H1 (cell line): ENCODE measurements at regions of chr13 and their contacts with region 1.

Region 1: DNA sequence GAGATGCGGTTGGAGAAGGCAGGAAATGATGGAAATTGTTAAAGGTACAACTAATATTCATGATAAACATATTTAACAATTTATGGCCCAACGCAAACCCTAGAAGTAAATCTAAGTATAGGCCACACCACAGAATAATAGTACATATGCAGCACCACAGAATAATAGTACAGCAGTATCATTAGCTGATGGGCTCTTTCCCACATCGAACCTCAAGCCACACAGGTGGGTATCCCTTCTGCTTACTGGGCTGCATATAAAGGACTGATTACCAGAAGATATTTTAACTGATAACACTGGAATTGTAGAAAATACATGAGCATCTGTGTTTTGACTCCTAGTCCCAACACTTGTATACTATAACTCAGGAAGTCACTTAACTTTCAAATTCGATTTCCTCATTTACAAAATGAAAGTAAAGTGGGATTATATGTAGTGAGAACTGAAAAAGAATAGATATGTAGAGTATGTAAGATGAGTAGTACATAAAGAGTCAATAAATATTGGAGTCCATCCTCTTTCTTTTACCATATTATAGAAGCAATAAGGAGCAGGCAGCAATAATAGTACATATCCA is 91.5 kb downstream of the TSC22D1 start:
- DNase-seq: no peak
- H3K4me3 ChIP-seq: no peak overlapping the region
- H3K27ac ChIP-seq: no peak overlapping the region
- H3K4me1 ChIP-seq: no peaks in the 10 kb centered on the region
- H3K27me3 ChIP-seq: no peaks in the 10 kb centered on the region
- CTCF ChIP-seq: no peak
- EP300 ChIP-seq: no peak
- POLR2A ChIP-seq: no peak
- RAD21 ChIP-seq: no peak

Region 2: GRCh38 chr13:44474122-44474909 is 10.3 kb before region 1 on chr13:
- CTCF ChIA-PET with region 1: interaction called, 18 read pairs
- POLR2A ChIA-PET with region 1: no interaction called
- DNase-seq: no peak
- H3K4me3 ChIP-seq: no peak overlapping the region
- H3K27ac ChIP-seq: no peak overlapping the region
- H3K4me1 ChIP-seq: peaks cover 0 to 3% (median 1%) of the 10 kb centered on the region in 4 experiments; a peak in 2 of 7 replicates
- H3K27me3 ChIP-seq: no peaks in the 10 kb centered on the region
- CTCF ChIP-seq: no peak
- EP300 ChIP-seq: no peak
- POLR2A ChIP-seq: no peak
- RAD21 ChIP-seq: no peak

Region 3: DNA sequence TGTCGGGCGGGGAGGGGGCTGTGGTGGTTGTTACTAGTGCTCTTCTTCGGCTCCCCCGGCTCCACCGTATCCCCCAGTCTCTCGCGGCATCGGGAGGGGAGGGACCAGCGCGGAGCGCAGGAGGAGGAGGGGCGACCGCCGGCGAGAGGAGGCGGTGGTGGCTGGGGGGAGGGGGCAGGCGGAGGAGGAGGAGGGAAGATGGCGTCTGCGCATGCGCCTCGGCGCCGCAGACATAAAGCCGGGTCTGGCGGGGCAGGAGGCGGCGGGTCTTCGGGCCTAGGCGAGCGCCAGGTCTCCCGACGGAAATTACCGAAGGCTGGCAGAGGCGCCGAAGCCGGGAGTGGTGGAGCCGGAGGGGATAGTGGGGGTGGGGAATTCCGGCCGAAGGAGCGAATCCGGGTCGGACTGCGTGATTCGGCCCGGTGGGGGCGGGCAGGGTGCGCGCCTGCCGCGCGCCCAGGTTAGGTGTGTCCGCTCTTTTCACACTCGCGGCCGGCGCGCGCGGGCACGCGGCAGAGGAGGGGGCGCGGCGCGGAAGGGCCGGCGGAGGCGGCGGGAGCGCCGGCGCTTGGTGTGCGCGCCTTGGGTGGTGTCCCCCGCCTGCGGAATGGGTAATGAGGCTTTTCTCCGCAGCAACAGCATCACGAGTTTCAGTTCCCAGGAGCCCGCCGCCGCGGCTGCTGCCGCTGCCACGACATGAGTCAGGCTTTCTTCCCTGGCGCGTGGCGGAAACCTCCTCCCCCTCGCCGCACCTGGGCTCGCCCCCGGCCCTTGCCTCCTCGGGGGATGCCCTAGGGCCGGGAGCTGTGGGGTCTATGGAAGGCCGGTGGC is 92.8 kb after region 1 on chr13:
- CTCF ChIA-PET with region 1: interaction called, 13 read pairs
- POLR2A ChIA-PET with region 1: interaction called, 3 read pairs
- DNase-seq: peak; percentile 95 to 97
- H3K4me3 ChIP-seq: peak overlapping the region; percentile 77 to 96 (median 92)
- H3K27ac ChIP-seq: peak overlapping the region; percentile 97
- H3K4me1 ChIP-seq: peaks cover 16 to 28% (median 18%) of the 10 kb centered on the region in 4 experiments; a peak in 6 of 7 replicates
- H3K27me3 ChIP-seq: no peaks in the 10 kb centered on the region
- CTCF ChIP-seq: no peak
- EP300 ChIP-seq: peak in 1 of 2 experiments; percentile 51; a peak in 1 of 3 replicates
- POLR2A ChIP-seq: peak; percentile 83 to 96
- RAD21 ChIP-seq: no peak

Region 4: DNA sequence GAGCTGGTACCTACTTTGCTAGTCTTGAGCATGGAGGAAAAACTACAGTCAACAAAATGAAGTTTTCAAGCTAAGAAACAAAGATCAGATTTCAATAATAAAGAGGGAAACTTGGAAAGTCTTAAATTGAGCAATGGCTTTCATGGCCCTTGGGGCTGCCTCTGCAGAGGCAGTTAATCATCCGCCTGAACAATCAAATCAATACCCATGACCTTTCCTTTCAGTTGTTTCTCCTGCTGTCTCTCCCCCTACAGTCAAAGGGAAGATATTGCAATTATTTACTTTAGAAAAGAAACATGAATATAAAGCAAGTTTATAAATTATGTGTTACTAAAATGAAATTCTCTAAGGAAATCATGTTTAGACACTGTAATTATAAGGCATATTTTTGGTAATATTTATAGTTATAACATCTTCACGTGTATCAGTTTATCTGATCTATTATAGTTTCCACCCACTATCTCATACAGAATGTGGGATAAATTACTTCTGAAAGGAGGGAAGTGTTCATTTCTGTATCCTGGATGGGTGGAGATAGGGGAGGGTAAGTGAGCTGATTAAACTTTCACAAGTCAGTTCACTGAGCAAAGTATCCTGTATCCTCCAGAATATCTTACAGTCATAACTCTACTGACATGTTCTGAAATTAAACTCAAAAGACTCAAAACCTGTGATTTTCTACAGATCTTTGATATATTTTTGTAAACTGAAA is 163.9 kb after region 1 on chr13:
- CTCF ChIA-PET with region 1: interaction called, 11 read pairs
- POLR2A ChIA-PET with region 1: no interaction called
- DNase-seq: no peak
- H3K4me3 ChIP-seq: peak overlapping the region in 1 of 4 experiments; percentile 42; a peak in 3 of 8 replicates
- H3K27ac ChIP-seq: no peak overlapping the region
- H3K4me1 ChIP-seq: peaks cover 0 to 9% (median 5%) of the 10 kb centered on the region in 4 experiments; a peak in 4 of 7 replicates
- H3K27me3 ChIP-seq: no peaks in the 10 kb centered on the region
- CTCF ChIP-seq: peak in 1 of 3 experiments; percentile 10; a peak in 1 of 4 replicates
- EP300 ChIP-seq: no peak
- POLR2A ChIP-seq: no peak
- RAD21 ChIP-seq: peak; percentile 26 to 29; a peak in 3 of 4 replicates

Region 5: DNA sequence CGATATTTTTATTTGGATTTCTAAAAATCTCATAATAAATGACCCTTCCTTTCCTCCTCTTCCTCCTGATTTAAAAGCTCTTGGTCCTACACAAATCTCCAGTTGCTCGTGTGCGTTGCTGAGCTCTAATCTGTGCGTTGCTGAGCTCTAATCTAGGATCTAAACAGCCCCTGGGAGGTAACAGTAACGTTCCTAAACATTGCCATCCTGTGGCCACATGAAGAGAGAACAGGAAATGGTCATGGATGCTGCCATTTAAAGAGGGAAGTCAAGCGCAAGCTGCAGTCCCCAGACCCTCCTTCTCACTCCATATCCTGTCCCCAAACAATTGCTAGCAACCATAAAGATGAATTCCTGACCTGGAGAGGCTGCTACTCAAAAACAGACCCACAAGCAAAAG is 333.8 kb after region 1 on chr13:
- CTCF ChIA-PET with region 1: interaction called, 21 read pairs
- POLR2A ChIA-PET with region 1: no interaction called
- DNase-seq: no peak
- H3K4me3 ChIP-seq: no peak overlapping the region
- H3K27ac ChIP-seq: no peak overlapping the region
- H3K4me1 ChIP-seq: peaks cover 2 to 18% (median 13%) of the 10 kb centered on the region in 4 experiments
- H3K27me3 ChIP-seq: no peaks in the 10 kb centered on the region
- CTCF ChIP-seq: peak in 2 of 3 experiments; percentile 63 to 73; a peak in 3 of 4 replicates
- EP300 ChIP-seq: no peak
- POLR2A ChIP-seq: no peak
- RAD21 ChIP-seq: peak; percentile 79 to 89

Region 6: GRCh38 chr13:44879463-44880058 is 394.9 kb after region 1 on chr13:
- CTCF ChIA-PET with region 1: interaction called, 22 read pairs
- POLR2A ChIA-PET with region 1: no interaction called
- DNase-seq: no peak
- H3K4me3 ChIP-seq: no peak overlapping the region; a peak in 1 of 8 replicates
- H3K27ac ChIP-seq: no peak overlapping the region
- H3K4me1 ChIP-seq: no peaks in the 10 kb centered on the region
- H3K27me3 ChIP-seq: no peaks in the 10 kb centered on the region
- CTCF ChIP-seq: peak; percentile 46 to 66 (median 51)
- EP300 ChIP-seq: no peak
- POLR2A ChIP-seq: no peak
- RAD21 ChIP-seq: peak; percentile 71 to 76